ENCODE measurements at regions of chr13 and their contacts with region 1.

Region 1: GRCh38 chr13:95676762-95677563 is at the start of gene DNAJC3:
- DNase-seq: peak; percentile 94 to 99 (median 98)
- ATAC-seq: peak; percentile 94
- H3K4me3 ChIP-seq: peak within 1 kb of the TSS; percentile 81 to 88
- H3K4me3 Mint-ChIP-seq: peak within 1 kb of the TSS; percentile 94
- H3K27ac ChIP-seq: peak within 1 kb of the TSS; percentile 73 to 76
- H3K27ac Mint-ChIP-seq: peak within 1 kb of the TSS; percentile 94
- H3K4me1 ChIP-seq: peaks cover 30% of the 10 kb centered on the region
- H3K4me1 Mint-ChIP-seq: peaks cover 65% of the 10 kb centered on the region
- H3K27me3 ChIP-seq: no peaks in the 10 kb centered on the region
- H3K27me3 Mint-ChIP-seq: no peaks in the 10 kb centered on the region
- CTCF ChIP-seq: no peak
- total RNA-seq, gene DNAJC3: 26.2 to 28.5 TPM

Region 2: DNA sequence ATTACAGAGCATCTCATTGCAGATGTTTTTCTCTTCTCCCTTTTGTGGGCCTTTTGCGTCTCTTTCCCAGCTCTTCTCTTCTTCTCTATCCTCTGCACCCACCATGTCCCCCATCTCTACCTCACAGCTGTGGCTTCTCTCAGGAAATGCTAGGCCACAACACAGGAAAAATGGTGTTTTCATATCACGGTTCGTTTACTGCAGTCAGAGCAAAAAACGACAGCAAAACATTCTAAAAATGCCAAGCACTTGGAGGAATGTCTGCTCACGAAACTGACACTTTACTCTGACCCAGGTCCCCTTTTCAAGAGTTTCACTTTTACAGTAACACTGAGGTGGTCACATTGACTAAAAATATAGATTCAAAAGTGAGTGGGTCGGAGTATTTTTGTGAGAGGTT is 1349.6 kb before region 1 on chr13:
- CTCF ChIA-PET with region 1: no interaction called
- POLR2A ChIA-PET with region 1: no interaction called
- intact Hi-C with region 1: loop called in 1 of 2 experiments (anchors 10 kb)
- DNase-seq: peak in 4 of 9 experiments; percentile 40 to 64 (median 54)
- ATAC-seq: peak; percentile 29
- H3K4me3 ChIP-seq: peak overlapping the region; percentile 1 to 3
- H3K4me3 Mint-ChIP-seq: peak overlapping the region; percentile 71
- H3K27ac ChIP-seq: peak overlapping the region in 1 of 2 experiments; percentile 63
- H3K27ac Mint-ChIP-seq: peak overlapping the region; percentile 82
- H3K4me1 ChIP-seq: peaks cover 77% of the 10 kb centered on the region
- H3K4me1 Mint-ChIP-seq: peaks cover 83% of the 10 kb centered on the region
- H3K27me3 ChIP-seq: no peaks in the 10 kb centered on the region
- H3K27me3 Mint-ChIP-seq: peaks cover 8% of the 10 kb centered on the region
- CTCF ChIP-seq: no peak

Region 3: GRCh38 chr13:94601446-94602431 is 1075.2 kb before region 1 on chr13 and contains the start of gene GPR180:
- CTCF ChIA-PET with region 1: no interaction called
- POLR2A ChIA-PET with region 1: no interaction called
- intact Hi-C with region 1: loop called (anchors 2 kb)
- DNase-seq: peak; percentile 66 to 97 (median 87)
- ATAC-seq: peak; percentile 98
- H3K4me3 ChIP-seq: peak within 1 kb of the TSS; percentile 62 to 76
- H3K4me3 Mint-ChIP-seq: peak within 1 kb of the TSS; percentile 84
- H3K27ac ChIP-seq: peak within 1 kb of the TSS; percentile 43 to 51
- H3K27ac Mint-ChIP-seq: peak within 1 kb of the TSS; percentile 86
- H3K4me1 ChIP-seq: peaks cover 3% of the 10 kb centered on the region
- H3K4me1 Mint-ChIP-seq: peaks cover 42% of the 10 kb centered on the region
- H3K27me3 ChIP-seq: no peaks in the 10 kb centered on the region
- H3K27me3 Mint-ChIP-seq: no peaks in the 10 kb centered on the region
- CTCF ChIP-seq: no peak
- total RNA-seq, gene GPR180: 0.64 to 0.71 TPM

Region 4: GRCh38 chr13:95480131-95480545 is 196.8 kb before region 1 on chr13:
- CTCF ChIA-PET with region 1: no interaction called
- POLR2A ChIA-PET with region 1: no interaction called
- intact Hi-C with region 1: loop called in 1 of 2 experiments (anchors 5 kb)
- DNase-seq: peak in 1 of 9 experiments; percentile 23
- ATAC-seq: no peak
- H3K4me3 ChIP-seq: no peak overlapping the region
- H3K4me3 Mint-ChIP-seq: no peak overlapping the region
- H3K27ac ChIP-seq: no peak overlapping the region
- H3K27ac Mint-ChIP-seq: no peak overlapping the region
- H3K4me1 ChIP-seq: no peaks in the 10 kb centered on the region
- H3K4me1 Mint-ChIP-seq: peaks cover 4% of the 10 kb centered on the region
- H3K27me3 ChIP-seq: no peaks in the 10 kb centered on the region
- H3K27me3 Mint-ChIP-seq: peaks cover 5% of the 10 kb centered on the region
- CTCF ChIP-seq: no peak

Region 5: GRCh38 chr13:95734124-95734523 is 57.2 kb after region 1 on chr13:
- CTCF ChIA-PET with region 1: no interaction called
- POLR2A ChIA-PET with region 1: no interaction called
- intact Hi-C with region 1: loop called in 1 of 2 experiments (anchors 2 kb)
- DNase-seq: no peak
- ATAC-seq: no peak
- H3K4me3 ChIP-seq: no peak overlapping the region
- H3K4me3 Mint-ChIP-seq: no peak overlapping the region
- H3K27ac ChIP-seq: no peak overlapping the region
- H3K27ac Mint-ChIP-seq: no peak overlapping the region
- H3K4me1 ChIP-seq: no peaks in the 10 kb centered on the region
- H3K4me1 Mint-ChIP-seq: peaks cover 10% of the 10 kb centered on the region
- H3K27me3 ChIP-seq: no peaks in the 10 kb centered on the region
- H3K27me3 Mint-ChIP-seq: no peaks in the 10 kb centered on the region
- CTCF ChIP-seq: no peak

Region 6: DNA sequence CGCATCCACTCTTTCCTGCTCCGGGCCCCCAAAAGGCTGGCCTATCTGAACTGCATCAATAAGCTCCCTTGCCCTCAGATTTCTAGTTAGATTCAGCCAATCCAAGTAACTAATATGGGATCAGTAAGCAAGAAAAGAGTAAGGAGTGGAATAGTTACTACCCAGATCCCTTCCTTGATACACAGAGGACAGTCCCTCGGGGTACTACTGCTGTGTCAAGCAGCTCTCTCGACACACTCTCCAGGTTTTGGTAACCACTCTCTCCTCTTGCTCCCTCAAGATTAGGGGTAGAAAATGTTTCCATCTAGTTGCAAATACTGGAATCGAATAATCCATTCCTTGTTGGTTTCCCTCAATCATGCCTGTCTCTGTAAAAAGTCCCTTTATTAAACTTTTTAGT is 310.9 kb after region 1 on chr13:
- CTCF ChIA-PET with region 1: no interaction called
- POLR2A ChIA-PET with region 1: no interaction called
- intact Hi-C with region 1: no loop called
- DNase-seq: no peak
- ATAC-seq: no peak
- H3K4me3 ChIP-seq: no peak overlapping the region
- H3K4me3 Mint-ChIP-seq: no peak overlapping the region
- H3K27ac ChIP-seq: no peak overlapping the region
- H3K27ac Mint-ChIP-seq: no peak overlapping the region
- H3K4me1 ChIP-seq: no peaks in the 10 kb centered on the region
- H3K4me1 Mint-ChIP-seq: no peaks in the 10 kb centered on the region
- H3K27me3 ChIP-seq: no peaks in the 10 kb centered on the region
- H3K27me3 Mint-ChIP-seq: no peaks in the 10 kb centered on the region
- CTCF ChIP-seq: no peak

Region 7: GRCh38 chr13:97221989-97222700 is 1545.2 kb after region 1 on chr13 and contains the start of gene MBNL2:
- CTCF ChIA-PET with region 1: no interaction called
- POLR2A ChIA-PET with region 1: no interaction called
- intact Hi-C with region 1: loop called in 1 of 2 experiments (anchors 10 kb)
- DNase-seq: peak; percentile 72 to 93 (median 85)
- ATAC-seq: peak; percentile 97
- H3K4me3 ChIP-seq: peak within 1 kb of the TSS; percentile 57 to 76
- H3K4me3 Mint-ChIP-seq: peak within 1 kb of the TSS; percentile 88
- H3K27ac ChIP-seq: peak within 1 kb of the TSS; percentile 81 to 86
- H3K27ac Mint-ChIP-seq: peak within 1 kb of the TSS; percentile 93
- H3K4me1 ChIP-seq: peaks cover 39% of the 10 kb centered on the region
- H3K4me1 Mint-ChIP-seq: peaks cover 42% of the 10 kb centered on the region
- H3K27me3 ChIP-seq: no peaks in the 10 kb centered on the region
- H3K27me3 Mint-ChIP-seq: no peaks in the 10 kb centered on the region
- CTCF ChIP-seq: no peak
- total RNA-seq, gene MBNL2: 31.2 to 33.2 TPM